ENCODE measurements at regions of chr3 and their contacts with region 1.

Region 1: DNA sequence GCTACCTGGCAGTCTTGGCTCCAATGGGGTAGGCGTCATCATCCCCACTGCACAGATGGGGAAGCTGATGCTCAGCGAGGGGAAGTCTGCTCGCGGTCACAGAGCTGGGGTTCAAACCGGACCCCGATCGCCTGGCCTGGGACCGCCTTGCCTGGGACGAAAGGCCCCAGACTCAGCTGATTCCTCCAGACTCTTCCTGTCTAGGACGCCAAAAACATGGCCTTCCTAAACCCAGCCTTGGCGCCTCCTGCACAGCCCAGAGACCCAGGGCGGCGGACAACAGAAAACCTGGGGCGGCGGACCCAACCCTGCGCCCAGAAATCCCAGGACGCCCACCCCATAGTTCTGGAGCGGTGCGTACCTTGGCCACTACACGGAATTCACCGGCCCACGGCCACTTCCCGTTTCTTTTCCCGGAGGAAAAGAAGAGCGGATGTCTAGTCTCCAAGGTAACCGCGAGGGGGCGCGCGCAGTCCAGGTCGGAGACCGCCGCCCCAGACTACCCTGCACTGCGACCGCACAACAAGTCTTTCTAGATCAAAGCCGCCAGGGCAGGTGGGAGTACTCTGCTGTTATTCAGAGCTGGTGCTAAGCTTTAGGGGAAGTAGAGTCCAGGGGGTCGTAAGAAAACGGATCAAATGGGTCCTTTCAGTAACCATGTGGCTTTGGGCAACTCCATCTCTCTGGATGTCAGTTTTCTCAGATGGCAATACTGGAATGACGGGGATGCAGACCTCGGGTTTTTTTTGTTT is 4.9 kb upstream of the IL17RD start:
- DNase-seq: peak; percentile 65 to 92
- H3K4me3 ChIP-seq: peak overlapping the region; percentile 33 to 64 (median 54); a peak in 6 of 8 replicates
- H3K27ac ChIP-seq: no peak overlapping the region
- H3K4me1 ChIP-seq: peaks cover 3 to 9% (median 5%) of the 10 kb centered on the region in 4 experiments
- H3K27me3 ChIP-seq: peaks cover 0 to 5% (median 0%) of the 10 kb centered on the region in 4 experiments; a peak in 3 of 7 replicates
- CTCF ChIP-seq: peak; percentile 76 to 81 (median 79)
- EP300 ChIP-seq: no peak
- POLR2A ChIP-seq: no peak
- RAD21 ChIP-seq: peak; percentile 91 to 93

Region 2: GRCh38 chr3:56988458-56989168 is 181.4 kb before region 1 on chr3:
- CTCF ChIA-PET with region 1: no interaction called
- POLR2A ChIA-PET with region 1: no interaction called
- DNase-seq: peak; percentile 36 to 88
- H3K4me3 ChIP-seq: 0 out of 8 replicates have a peak overlapping the region, but pooled peaks of 1 of the 4 experiments have one; percentile 14
- H3K27ac ChIP-seq: no peak overlapping the region
- H3K4me1 ChIP-seq: peaks cover 0 to 12% (median 3%) of the 10 kb centered on the region in 4 experiments; a peak in 5 of 7 replicates
- H3K27me3 ChIP-seq: no peaks in the 10 kb centered on the region
- CTCF ChIP-seq: peak; percentile 47 to 89 (median 69)
- EP300 ChIP-seq: no peak
- POLR2A ChIP-seq: no peak
- RAD21 ChIP-seq: peak; percentile 96 to 97

Region 3: GRCh38 chr3:57094575-57094974 is 75.5 kb before region 1 on chr3:
- CTCF ChIA-PET with region 1: interaction called, 64 read pairs
- POLR2A ChIA-PET with region 1: no interaction called
- DNase-seq: no peak
- H3K4me3 ChIP-seq: no peak overlapping the region
- H3K27ac ChIP-seq: no peak overlapping the region
- H3K4me1 ChIP-seq: peaks cover 0 to 3% (median 1%) of the 10 kb centered on the region in 4 experiments; a peak in 3 of 7 replicates
- H3K27me3 ChIP-seq: no peaks in the 10 kb centered on the region
- CTCF ChIP-seq: no peak
- EP300 ChIP-seq: no peak
- POLR2A ChIP-seq: no peak
- RAD21 ChIP-seq: no peak

Region 4: GRCh38 chr3:57130571-57131209 is 39.4 kb before region 1 on chr3:
- CTCF ChIA-PET with region 1: interaction called, 9 read pairs
- POLR2A ChIA-PET with region 1: interaction called, 12 read pairs
- DNase-seq: peak; percentile 94 to 99
- H3K4me3 ChIP-seq: peak overlapping the region in 2 of 4 experiments; percentile 1 to 36; a peak in 3 of 8 replicates
- H3K27ac ChIP-seq: peak overlapping the region; percentile 80; the same call in 1 of the 2 replicates
- H3K4me1 ChIP-seq: peaks cover 23 to 55% (median 43%) of the 10 kb centered on the region in 4 experiments
- H3K27me3 ChIP-seq: peaks cover under 1 to 5% (median 2%) of the 10 kb centered on the region in 4 experiments; a peak in 5 of 7 replicates
- CTCF ChIP-seq: no peak
- EP300 ChIP-seq: peak; percentile 53 to 95
- POLR2A ChIP-seq: peak; percentile 62 to 68
- RAD21 ChIP-seq: 0 out of 4 replicates have a peak, but pooled peaks of 1 of the 2 experiments have one; percentile 9

Region 5: GRCh38 chr3:57192028-57192427 is 22.0 kb after region 1 on chr3:
- CTCF ChIA-PET with region 1: interaction called, 22 read pairs
- POLR2A ChIA-PET with region 1: interaction called, 6 read pairs
- DNase-seq: no peak
- H3K4me3 ChIP-seq: no peak overlapping the region
- H3K27ac ChIP-seq: no peak overlapping the region
- H3K4me1 ChIP-seq: no peaks in the 10 kb centered on the region; a peak in 1 of 7 replicates
- H3K27me3 ChIP-seq: no peaks in the 10 kb centered on the region
- CTCF ChIP-seq: no peak
- EP300 ChIP-seq: no peak
- POLR2A ChIP-seq: no peak
- RAD21 ChIP-seq: no peak

Region 6: GRCh38 chr3:57221883-57222282 is 51.8 kb after region 1 on chr3:
- CTCF ChIA-PET with region 1: interaction called, 61 read pairs
- POLR2A ChIA-PET with region 1: interaction called, 3 read pairs
- DNase-seq: no peak
- H3K4me3 ChIP-seq: no peak overlapping the region
- H3K27ac ChIP-seq: no peak overlapping the region
- H3K4me1 ChIP-seq: no peaks in the 10 kb centered on the region
- H3K27me3 ChIP-seq: no peaks in the 10 kb centered on the region
- CTCF ChIP-seq: peak in 2 of 3 experiments; percentile 37 to 41; a peak in 2 of 4 replicates
- EP300 ChIP-seq: no peak
- POLR2A ChIP-seq: no peak
- RAD21 ChIP-seq: peak; percentile 78

Measured in H1 (cell line).